Activated T-helper 2 cell treated with anti-CD3 and anti-CD28 coated beads, Interferon-gamma antibody, Interleukin-2, Interleukin-4, amounts not matched to agents 10 μg/mL and 5 μg/mL and 100 μg/mL, durations not matched to agents 14 hours and 24 hours and 36 hours (primary cell): ENCODE measurements at regions of chr20 and their contacts with region 1.

Region 1: GRCh38 chr20:34747479-34747878 is 43.3 kb downstream of the TP53INP2 start:
- DNase-seq: no peak
- H3K4me3 Mint-ChIP-seq: no peak overlapping the region
- H3K27ac Mint-ChIP-seq: no peak overlapping the region
- H3K4me1 Mint-ChIP-seq: peaks cover 11% of the 10 kb centered on the region
- H3K27me3 Mint-ChIP-seq: no peaks in the 10 kb centered on the region

Region 2: GRCh38 chr20:34720266-34720665 is 27.2 kb before region 1 on chr20:
- intact Hi-C with region 1: loop called (anchors 1 kb)
- DNase-seq: no peak
- H3K4me3 Mint-ChIP-seq: no peak overlapping the region
- H3K27ac Mint-ChIP-seq: no peak overlapping the region
- H3K4me1 Mint-ChIP-seq: peaks cover 17% of the 10 kb centered on the region
- H3K27me3 Mint-ChIP-seq: no peaks in the 10 kb centered on the region